ENCODE measurements at regions of chr6 and their contacts with region 1.

Region 1: GRCh38 chr6:160379464-160379863 is 31.3 kb downstream of the SLC22A3 start:
- DNase-seq: no peak
- H3K4me3 ChIP-seq: peak overlapping the region in 1 of 2 donors; percentile 20
- H3K27ac ChIP-seq: peak overlapping the region in 1 of 2 donors; percentile 79
- H3K4me1 ChIP-seq: peaks cover 0 to 29% of the 10 kb centered on the region in 2 donors
- H3K27me3 ChIP-seq: no peaks in the 10 kb centered on the region
- CTCF ChIP-seq: no peak

Region 2: GRCh38 chr6:160355001-160355400 is 24.5 kb before region 1 on chr6:
- intact Hi-C with region 1: loop called (anchors 2 kb)
- DNase-seq: peak; percentile 31 to 84
- H3K4me3 ChIP-seq: peak overlapping the region in 1 of 2 donors; percentile 14
- H3K27ac ChIP-seq: peak overlapping the region; percentile 91 to 96
- H3K4me1 ChIP-seq: peaks cover 7 to 56% of the 10 kb centered on the region in 2 donors
- H3K27me3 ChIP-seq: no peaks in the 10 kb centered on the region
- CTCF ChIP-seq: no peak

Region 3: GRCh38 chr6:160455541-160456213 is 76.2 kb after region 1 on chr6:
- intact Hi-C with region 1: no loop called
- DNase-seq: peak in 1 of 2 donors; percentile 81
- H3K4me3 ChIP-seq: peak overlapping the region in 1 of 2 donors; percentile 10
- H3K27ac ChIP-seq: peak overlapping the region; percentile 32 to 51
- H3K4me1 ChIP-seq: peaks cover 0 to 8% of the 10 kb centered on the region in 2 donors
- H3K27me3 ChIP-seq: no peaks in the 10 kb centered on the region
- CTCF ChIP-seq: peak; percentile 95 to 98 (median 95)